ENCODE measurements at regions of chr3 and their contacts with region 1.

Region 1: GRCh38 chr3:79361748-79362378 is 405.9 kb downstream of the ROBO1 start:
- DNase-seq: no peak
- H3K4me3 ChIP-seq: peak overlapping the region in 1 of 4 donors; percentile 2
- H3K27ac ChIP-seq: no peak overlapping the region
- H3K4me1 ChIP-seq: no peaks in the 10 kb centered on the region
- H3K27me3 ChIP-seq: no peaks in the 10 kb centered on the region
- CTCF ChIP-seq: peak; percentile 37 to 73 (median 66)
- EP300 ChIP-seq: no peak
- POLR2A ChIP-seq: no peak

Region 2: GRCh38 chr3:78659386-78659987 is 702.4 kb before region 1 on chr3:
- intact Hi-C with region 1: loop called (anchors 5 kb)
- DNase-seq: no peak
- H3K4me3 ChIP-seq: no peak overlapping the region
- H3K27ac ChIP-seq: no peak overlapping the region
- H3K4me1 ChIP-seq: no peaks in the 10 kb centered on the region
- H3K27me3 ChIP-seq: no peaks in the 10 kb centered on the region
- CTCF ChIP-seq: peak; percentile 70 to 72 (median 71)
- EP300 ChIP-seq: no peak
- POLR2A ChIP-seq: no peak

Region 3: GRCh38 chr3:79005084-79005483 is 356.8 kb before region 1 on chr3:
- intact Hi-C with region 1: no loop called
- DNase-seq: no peak
- H3K4me3 ChIP-seq: no peak overlapping the region
- H3K27ac ChIP-seq: no peak overlapping the region
- H3K4me1 ChIP-seq: no peaks in the 10 kb centered on the region
- H3K27me3 ChIP-seq: no peaks in the 10 kb centered on the region
- CTCF ChIP-seq: no peak
- EP300 ChIP-seq: no peak
- POLR2A ChIP-seq: no peak

Region 4: GRCh38 chr3:79081335-79081734 is 280.5 kb before region 1 on chr3:
- intact Hi-C with region 1: loop called (anchors 5 kb)
- DNase-seq: no peak
- H3K4me3 ChIP-seq: no peak overlapping the region
- H3K27ac ChIP-seq: no peak overlapping the region
- H3K4me1 ChIP-seq: no peaks in the 10 kb centered on the region
- H3K27me3 ChIP-seq: no peaks in the 10 kb centered on the region
- CTCF ChIP-seq: no peak
- EP300 ChIP-seq: no peak
- POLR2A ChIP-seq: no peak

Region 5: GRCh38 chr3:79211586-79212359 is 150.1 kb before region 1 on chr3:
- intact Hi-C with region 1: no loop called
- DNase-seq: no peak
- H3K4me3 ChIP-seq: no peak overlapping the region
- H3K27ac ChIP-seq: no peak overlapping the region
- H3K4me1 ChIP-seq: no peaks in the 10 kb centered on the region
- H3K27me3 ChIP-seq: no peaks in the 10 kb centered on the region
- CTCF ChIP-seq: no peak
- EP300 ChIP-seq: no peak
- POLR2A ChIP-seq: no peak

Measured in esophagus muscularis mucosa (tissue), 4 donors.